ENCODE measurements at regions of chr3 and their contacts with region 1.

Region 1: GRCh38 chr3:140972833-140973232 is 31.2 kb downstream of the SLC25A36 start:
- DNase-seq: no peak
- ATAC-seq: peak in 2 of 4 donors; percentile 47 to 72
- H3K4me3 ChIP-seq: no peak overlapping the region
- H3K27ac ChIP-seq: no peak overlapping the region
- H3K4me1 ChIP-seq: no peaks in the 10 kb centered on the region
- H3K27me3 ChIP-seq: no peaks in the 10 kb centered on the region
- CTCF ChIP-seq: peak; percentile 38

Region 2: DNA sequence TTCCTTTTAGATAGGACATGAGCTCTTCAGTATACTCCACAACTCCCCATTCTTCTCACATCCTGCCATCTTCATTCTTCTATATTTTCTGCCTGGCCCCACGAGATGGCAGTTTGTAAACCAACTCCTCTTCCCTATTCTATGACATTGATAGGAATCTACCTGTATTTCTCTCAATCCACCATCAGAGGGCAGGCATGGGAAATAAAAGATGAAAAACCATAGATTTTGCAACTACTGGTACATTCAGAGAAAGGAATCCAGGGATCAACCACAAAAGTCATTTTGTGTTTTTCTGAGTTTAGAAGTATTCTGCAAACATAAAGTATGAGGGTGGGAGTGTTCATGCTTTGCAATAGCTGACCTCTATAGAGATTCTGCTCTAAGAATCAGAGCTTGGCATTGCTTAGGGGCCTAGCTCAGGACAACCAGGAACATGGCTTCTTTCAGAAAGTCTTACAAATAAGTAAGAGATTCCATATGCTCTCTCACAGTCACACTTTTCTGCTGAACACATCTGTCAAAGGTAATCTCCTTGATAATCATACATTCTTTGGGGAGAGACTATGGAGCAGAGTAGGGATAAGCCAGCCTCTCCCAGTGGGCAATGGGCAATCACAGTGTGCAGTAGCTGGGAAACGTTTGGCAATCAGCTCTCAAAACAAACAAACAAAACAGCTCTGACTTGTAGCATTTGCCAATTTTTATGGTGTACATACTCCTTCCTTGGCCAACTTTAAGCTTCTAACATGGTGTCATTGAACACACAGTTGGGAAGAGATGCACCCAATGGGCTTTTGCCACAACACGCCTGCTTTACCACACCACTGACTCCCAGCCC is 74.3 kb before region 1 on chr3:
- intact Hi-C with region 1: loop called in 1 of 2 experiments (anchors 2 kb)
- DNase-seq: no peak
- ATAC-seq: peak in 3 of 4 donors; percentile 76 to 91 (median 81)
- H3K4me3 ChIP-seq: no peak overlapping the region
- H3K27ac ChIP-seq: no peak overlapping the region
- H3K4me1 ChIP-seq: peaks cover 3% of the 10 kb centered on the region
- H3K27me3 ChIP-seq: no peaks in the 10 kb centered on the region
- CTCF ChIP-seq: peak; percentile 57

Region 3: DNA sequence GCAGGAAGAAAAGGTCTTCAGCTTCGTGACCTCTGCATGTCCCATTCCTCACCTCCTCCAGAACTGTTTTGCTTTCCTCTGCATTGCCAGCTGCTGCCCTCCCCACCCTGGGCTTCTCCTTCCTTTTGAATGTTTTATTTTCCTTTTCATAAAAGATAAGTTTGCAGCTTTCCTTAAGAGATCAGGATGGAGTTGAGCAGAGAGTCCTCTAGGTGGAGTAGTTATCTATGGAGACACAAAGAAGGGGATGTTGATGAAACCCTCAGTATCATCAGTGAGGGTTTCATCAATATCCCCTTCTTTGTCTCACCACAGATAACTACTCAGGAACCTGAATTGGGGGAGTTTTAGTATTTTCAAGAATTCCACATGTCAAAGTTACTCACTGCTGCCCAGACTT is 50.2 kb before region 1 on chr3:
- intact Hi-C with region 1: loop called in 1 of 2 experiments (anchors 5 kb)
- DNase-seq: no peak
- ATAC-seq: no peak
- H3K4me3 ChIP-seq: no peak overlapping the region
- H3K27ac ChIP-seq: no peak overlapping the region
- H3K4me1 ChIP-seq: peaks cover 15% of the 10 kb centered on the region
- H3K27me3 ChIP-seq: no peaks in the 10 kb centered on the region
- CTCF ChIP-seq: peak; percentile 33

Region 4: DNA sequence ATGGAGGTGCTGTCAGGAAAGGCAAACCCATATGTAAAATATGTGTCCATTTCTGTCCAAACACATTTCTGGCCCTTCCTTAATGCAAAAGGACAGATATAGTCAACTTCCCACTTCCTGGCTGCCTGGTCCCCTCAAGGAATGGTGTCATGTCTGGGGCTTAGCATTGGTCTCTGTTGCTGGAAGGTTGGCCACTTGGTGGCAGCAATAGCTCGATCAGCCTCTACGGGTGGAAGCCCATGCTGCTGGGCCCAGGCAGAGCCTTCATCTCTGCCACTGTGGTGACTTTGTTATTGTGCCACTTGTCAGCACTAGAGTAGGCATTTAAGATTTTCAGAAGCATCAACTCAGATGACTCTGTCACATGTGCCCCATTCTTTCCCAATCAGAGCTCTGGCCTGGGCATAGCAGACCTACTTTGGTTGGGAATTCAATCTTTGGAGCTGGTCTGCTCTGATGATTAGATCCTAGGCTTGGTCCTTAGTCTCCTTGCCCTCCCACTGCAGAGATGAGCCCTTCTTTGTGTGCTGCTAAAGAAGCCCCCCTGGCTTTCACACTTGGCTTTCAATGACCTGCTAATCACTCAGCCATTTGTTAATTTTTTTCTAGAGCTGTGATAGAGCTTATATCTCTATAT is 27.3 kb after region 1 on chr3:
- intact Hi-C with region 1: no loop called
- DNase-seq: peak; percentile 63 to 75
- ATAC-seq: peak; percentile 86 to 97 (median 94)
- H3K4me3 ChIP-seq: no peak overlapping the region
- H3K27ac ChIP-seq: no peak overlapping the region
- H3K4me1 ChIP-seq: no peaks in the 10 kb centered on the region
- H3K27me3 ChIP-seq: no peaks in the 10 kb centered on the region
- CTCF ChIP-seq: peak; percentile 80

Measured in psoas muscle (tissue), 8 donors.